ENCODE measurements at regions of chr11 and their contacts with region 1.

Region 1: GRCh38 chr11:61602775-61603569 is 22.1 kb upstream of the SYT7 start:
- DNase-seq: no peak
- H3K4me3 ChIP-seq: no peak overlapping the region
- H3K27ac ChIP-seq: no peak overlapping the region
- H3K4me1 ChIP-seq: peaks cover 5 to 22% (median 18%) of the 10 kb centered on the region in 4 experiments
- H3K27me3 ChIP-seq: no peaks in the 10 kb centered on the region; a peak in 1 of 7 replicates
- CTCF ChIP-seq: no peak
- EP300 ChIP-seq: no peak
- POLR2A ChIP-seq: no peak
- RAD21 ChIP-seq: no peak

Region 2: DNA sequence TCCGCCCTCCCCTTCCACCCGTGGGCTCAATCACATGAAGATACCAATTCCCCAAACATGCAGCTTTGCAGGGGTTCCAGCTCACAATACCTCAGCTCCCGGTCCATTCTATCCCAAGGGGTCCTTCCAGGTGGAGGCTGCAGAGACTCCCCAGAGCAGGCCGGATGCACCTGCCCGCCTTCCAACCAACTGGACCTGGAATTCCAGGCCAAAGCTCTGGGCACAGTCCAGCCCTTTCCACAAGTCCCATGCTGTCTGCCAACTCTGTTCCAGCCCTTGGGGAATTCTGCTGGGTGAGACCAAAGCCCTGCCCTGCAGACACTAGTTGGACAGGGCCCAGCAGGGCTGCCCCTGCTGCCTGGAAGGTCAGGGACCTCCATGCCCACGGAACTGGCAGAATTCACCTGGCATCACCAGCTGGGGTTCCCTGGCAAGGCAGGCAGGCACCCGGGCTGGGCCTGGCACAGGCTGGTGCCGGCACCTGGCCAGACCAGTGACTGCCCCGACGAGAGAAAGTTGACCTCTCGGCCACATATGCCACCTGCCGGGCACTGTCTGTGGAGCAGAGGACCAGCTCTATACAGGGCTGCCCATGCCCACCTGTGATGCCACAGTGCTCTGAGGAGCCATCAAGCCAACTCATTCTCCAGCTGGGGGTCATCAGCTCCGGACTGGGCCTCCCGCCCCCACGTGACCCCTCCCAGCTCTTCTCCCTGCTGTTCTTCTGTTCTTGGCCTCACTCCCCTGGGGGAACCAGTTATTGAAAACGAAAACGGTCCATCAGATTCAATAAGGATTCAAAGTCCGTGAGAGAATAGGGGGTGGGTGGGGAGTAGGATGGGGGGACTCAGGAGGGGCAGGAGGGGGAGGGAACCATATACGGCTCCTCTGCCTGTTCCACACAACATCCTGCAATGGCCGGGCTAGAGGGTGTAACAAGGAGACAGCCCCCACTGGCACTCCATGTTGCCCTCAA is 26.8 kb before region 1 on chr11:
- CTCF ChIA-PET with region 1: interaction called, 19 read pairs
- POLR2A ChIA-PET with region 1: interaction called, 3 read pairs
- DNase-seq: no peak
- H3K4me3 ChIP-seq: no peak overlapping the region
- H3K27ac ChIP-seq: no peak overlapping the region
- H3K4me1 ChIP-seq: peaks cover 4 to 39% (median 31%) of the 10 kb centered on the region in 4 experiments
- H3K27me3 ChIP-seq: peaks cover 0 to 19% (median 16%) of the 10 kb centered on the region in 4 experiments; a peak in 6 of 7 replicates
- CTCF ChIP-seq: no peak
- EP300 ChIP-seq: no peak
- POLR2A ChIP-seq: no peak
- RAD21 ChIP-seq: no peak

Measured in H1 (cell line).